CD8-positive, alpha-beta T cell (primary cell): ENCODE measurements at regions of chr5 and their contacts with region 1.

Region 1: DNA sequence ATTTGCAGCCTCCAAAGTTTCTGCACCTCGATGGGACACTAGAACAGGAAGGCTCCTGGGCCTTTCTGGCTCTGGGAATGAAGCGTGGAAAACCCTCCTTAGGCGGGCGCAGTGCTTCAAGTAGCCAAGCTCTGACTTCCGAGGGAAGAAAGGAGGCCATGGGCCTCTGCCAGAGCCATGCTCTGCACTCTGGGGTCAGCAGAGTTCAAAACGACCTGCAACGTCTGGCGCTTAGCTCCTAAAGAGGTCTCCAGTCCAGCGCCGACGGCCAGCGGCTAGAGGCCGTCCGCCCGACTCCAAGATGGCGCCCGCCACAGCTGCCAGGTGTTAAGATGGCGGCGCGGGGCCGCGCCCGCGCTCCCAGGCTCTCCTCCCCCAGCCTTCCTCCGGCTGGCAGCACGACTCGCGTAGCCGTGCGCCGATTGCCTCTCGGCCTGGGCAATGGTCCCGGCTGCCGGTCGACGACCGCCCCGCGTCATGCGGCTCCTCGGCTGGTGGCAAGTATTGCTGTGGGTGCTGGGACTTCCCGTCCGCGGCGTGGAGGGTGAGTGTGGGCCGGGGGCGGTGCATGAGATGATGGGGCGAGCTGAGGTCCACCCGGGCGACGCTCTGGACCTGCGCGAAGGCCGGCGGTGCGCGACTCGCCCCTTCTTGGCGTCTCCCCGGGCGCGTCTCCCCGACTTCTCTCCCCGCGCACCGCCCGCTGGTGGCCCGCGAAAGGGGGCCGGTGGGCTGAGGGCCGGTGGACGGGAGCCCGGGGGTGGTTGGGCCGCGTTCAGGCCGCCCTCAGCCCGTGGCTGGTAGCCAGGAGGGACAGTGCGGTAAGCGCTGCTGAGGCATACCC is at the start of gene TXNDC15:
- DNase-seq: peak; percentile 61 to 91 (median 80)
- ATAC-seq: peak; percentile 92
- H3K4me3 ChIP-seq: peak within 1 kb of the TSS; percentile 59 to 92
- H3K4me3 Mint-ChIP-seq: peak within 1 kb of the TSS; percentile 92
- H3K27ac ChIP-seq: peak within 1 kb of the TSS; percentile 67 to 96
- H3K27ac Mint-ChIP-seq: peak within 1 kb of the TSS; percentile 94
- H3K4me1 ChIP-seq: peaks cover 36% of the 10 kb centered on the region
- H3K4me1 Mint-ChIP-seq: peaks cover 40% of the 10 kb centered on the region
- H3K27me3 ChIP-seq: no peaks in the 10 kb centered on the region
- H3K27me3 Mint-ChIP-seq: no peaks in the 10 kb centered on the region
- CTCF ChIP-seq: no peak
- total RNA-seq, gene TXNDC15: 19.8 to 21.0 TPM

Region 2: DNA sequence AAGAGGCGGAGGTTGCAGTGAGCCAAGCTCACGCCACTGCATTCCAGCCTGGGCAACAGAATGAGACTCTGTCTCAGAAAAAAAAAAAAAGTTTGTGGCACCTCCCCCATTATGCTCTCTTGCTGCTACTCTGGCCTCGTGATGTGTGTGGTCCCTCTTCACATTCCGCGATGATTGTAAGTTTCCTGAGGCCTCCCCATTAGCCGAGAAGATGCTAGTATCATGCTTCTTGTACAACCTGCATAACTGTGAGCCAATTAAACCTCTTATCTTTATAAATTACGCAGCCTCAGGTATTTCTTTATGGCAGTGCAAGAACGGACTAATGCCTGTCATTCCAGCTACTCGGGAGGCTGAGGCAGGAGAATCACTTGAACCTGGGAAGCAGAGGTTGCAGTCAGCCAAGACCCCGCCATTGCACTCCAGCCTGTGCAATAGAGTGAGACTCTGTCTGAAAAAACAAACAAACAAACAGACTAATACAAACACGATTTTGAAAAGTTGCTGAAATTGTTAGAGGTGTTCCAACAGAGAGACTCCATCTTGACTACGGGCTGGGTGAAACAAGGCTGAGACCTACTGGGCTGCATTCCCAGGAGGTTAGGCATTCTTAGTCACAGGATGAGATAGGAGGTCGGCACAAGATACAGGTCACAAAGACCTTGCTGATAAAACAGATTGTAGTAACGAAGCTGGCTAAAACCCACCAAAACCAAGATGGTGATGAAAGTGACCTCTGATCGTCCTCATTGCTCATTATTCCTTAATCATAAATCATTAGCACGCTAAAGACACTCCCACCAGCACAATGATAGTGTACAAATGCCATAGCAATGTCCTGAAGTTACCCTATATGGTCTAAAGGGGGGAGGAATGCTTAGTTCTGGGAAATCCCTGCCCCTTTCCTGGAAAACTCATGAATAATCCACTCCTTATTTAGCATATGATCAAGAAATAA is 1902.5 kb before region 1 on chr5:
- CTCF ChIA-PET with region 1: no interaction called
- POLR2A ChIA-PET with region 1: no interaction called
- intact Hi-C with region 1: no loop called
- DNase-seq: no peak
- ATAC-seq: no peak
- H3K4me3 ChIP-seq: no peak overlapping the region
- H3K4me3 Mint-ChIP-seq: no peak overlapping the region
- H3K27ac ChIP-seq: no peak overlapping the region
- H3K27ac Mint-ChIP-seq: no peak overlapping the region
- H3K4me1 ChIP-seq: no peaks in the 10 kb centered on the region
- H3K4me1 Mint-ChIP-seq: no peaks in the 10 kb centered on the region
- H3K27me3 ChIP-seq: no peaks in the 10 kb centered on the region
- H3K27me3 Mint-ChIP-seq: peaks cover under 1% of the 10 kb centered on the region
- CTCF ChIP-seq: no peak

Region 3: DNA sequence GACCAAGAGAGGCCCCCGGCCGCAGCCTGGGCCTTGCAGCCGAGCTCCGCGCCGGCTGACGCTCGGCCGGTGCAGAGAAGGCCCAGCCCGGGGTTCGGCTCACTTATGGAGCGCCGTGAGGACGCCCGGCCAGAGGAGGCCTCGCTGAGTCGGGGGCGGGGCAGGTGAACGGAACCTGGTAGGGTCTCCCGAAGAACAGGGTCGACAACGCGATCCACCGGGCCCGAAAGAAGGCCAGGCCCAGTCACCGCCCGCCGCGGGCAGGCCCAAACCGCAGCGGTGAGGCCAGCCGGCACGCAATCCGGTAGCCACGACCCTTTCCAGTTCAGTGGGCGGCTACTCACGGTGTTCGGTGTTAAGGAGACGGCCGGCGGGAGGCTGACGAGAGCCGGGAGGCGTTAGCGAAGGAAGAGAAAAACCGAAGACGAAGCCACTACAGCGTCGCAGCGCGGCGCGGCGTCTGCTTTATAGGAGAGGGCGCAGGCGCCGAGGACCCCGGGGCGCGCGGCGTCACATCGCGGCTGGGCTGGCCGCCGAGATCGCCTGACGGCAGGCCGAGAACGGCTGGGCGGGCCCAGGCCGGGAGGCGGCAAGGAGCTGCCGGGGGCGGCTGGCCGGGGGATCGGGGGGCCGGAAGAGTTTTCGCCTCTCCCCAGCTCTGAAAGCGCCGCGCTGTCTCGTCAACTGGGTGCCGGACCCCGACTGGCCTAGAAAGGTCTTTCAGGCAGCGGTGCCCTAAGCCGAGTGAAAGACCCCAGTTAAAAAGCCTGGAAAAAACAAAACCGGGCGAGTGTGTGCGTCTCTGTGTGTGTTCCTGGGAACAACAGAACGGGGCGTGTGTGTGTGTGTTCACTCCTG is 697.5 kb before region 1 on chr5 and contains the start of gene SKP1:
- CTCF ChIA-PET with region 1: no interaction called
- POLR2A ChIA-PET with region 1: no interaction called
- intact Hi-C with region 1: no loop called
- DNase-seq: peak; percentile 79 to 93 (median 85)
- ATAC-seq: peak; percentile 88
- H3K4me3 ChIP-seq: peak within 1 kb of the TSS; percentile 98 to 99
- H3K4me3 Mint-ChIP-seq: peak within 1 kb of the TSS; percentile 98
- H3K27ac ChIP-seq: peak within 1 kb of the TSS; percentile 98
- H3K27ac Mint-ChIP-seq: peak within 1 kb of the TSS; percentile 99
- H3K4me1 ChIP-seq: peaks cover 31% of the 10 kb centered on the region
- H3K4me1 Mint-ChIP-seq: peaks cover 34% of the 10 kb centered on the region
- H3K27me3 ChIP-seq: no peaks in the 10 kb centered on the region
- H3K27me3 Mint-ChIP-seq: no peaks in the 10 kb centered on the region
- CTCF ChIP-seq: no peak
- total RNA-seq, gene SKP1: 290 to 301 TPM

Region 4: DNA sequence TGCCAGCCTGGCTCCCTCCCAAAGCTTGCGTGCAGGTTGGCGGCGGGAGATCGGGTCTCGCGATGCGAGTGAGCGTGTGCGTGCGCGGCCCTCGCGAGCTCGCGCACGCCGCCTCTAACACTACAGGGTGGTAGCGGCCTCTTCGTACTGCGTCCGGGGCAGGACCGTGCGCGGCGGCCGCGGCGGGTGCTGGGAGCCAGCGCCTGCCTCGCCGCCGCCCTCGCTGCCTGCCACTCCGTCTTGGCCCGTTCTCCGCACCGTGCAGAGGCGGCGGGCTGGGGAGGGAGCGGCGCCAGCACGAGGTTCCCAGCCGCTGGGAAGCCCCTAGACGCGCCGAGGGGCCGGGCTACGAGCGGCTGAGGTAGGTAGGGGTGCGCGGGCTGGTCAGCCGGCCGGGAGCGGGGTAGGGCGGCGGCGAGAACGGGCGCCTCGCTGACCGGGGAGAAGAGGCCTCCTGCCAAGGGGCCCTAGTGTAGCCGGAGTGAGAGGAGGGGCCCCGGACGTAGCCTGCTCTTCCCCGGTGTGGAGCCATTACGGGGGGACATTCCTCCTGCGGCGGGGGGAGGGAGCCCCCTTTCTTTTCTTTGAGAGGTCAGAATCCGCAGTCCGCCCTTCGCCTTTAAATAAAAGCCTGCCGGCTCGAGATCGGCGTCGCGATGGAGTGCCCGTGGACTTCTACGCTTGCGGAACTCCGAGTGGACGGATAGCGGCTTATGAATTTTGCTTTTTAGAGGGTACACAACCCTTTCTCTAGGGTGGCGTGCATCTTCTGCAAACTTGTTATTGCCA is 28.2 kb before region 1 on chr5 and contains the start of gene C5orf24:
- CTCF ChIA-PET with region 1: no interaction called
- POLR2A ChIA-PET with region 1: interaction called, 34 read pairs
- intact Hi-C with region 1: loop called (anchors 1 kb)
- DNase-seq: peak; percentile 82 to 98 (median 90)
- ATAC-seq: peak; percentile 92
- H3K4me3 ChIP-seq: peak within 1 kb of the TSS; percentile 85 to 94
- H3K4me3 Mint-ChIP-seq: peak within 1 kb of the TSS; percentile 87
- H3K27ac ChIP-seq: peak within 1 kb of the TSS; percentile 84 to 91
- H3K27ac Mint-ChIP-seq: peak within 1 kb of the TSS; percentile 94
- H3K4me1 ChIP-seq: peaks cover 18% of the 10 kb centered on the region
- H3K4me1 Mint-ChIP-seq: peaks cover 34% of the 10 kb centered on the region
- H3K27me3 ChIP-seq: no peaks in the 10 kb centered on the region
- H3K27me3 Mint-ChIP-seq: no peaks in the 10 kb centered on the region
- CTCF ChIP-seq: no peak
- total RNA-seq, gene C5orf24: 29.9 to 31.0 TPM